H1 (cell line): ENCODE measurements at regions of chr9 and their contacts with region 1.

Region 1: DNA sequence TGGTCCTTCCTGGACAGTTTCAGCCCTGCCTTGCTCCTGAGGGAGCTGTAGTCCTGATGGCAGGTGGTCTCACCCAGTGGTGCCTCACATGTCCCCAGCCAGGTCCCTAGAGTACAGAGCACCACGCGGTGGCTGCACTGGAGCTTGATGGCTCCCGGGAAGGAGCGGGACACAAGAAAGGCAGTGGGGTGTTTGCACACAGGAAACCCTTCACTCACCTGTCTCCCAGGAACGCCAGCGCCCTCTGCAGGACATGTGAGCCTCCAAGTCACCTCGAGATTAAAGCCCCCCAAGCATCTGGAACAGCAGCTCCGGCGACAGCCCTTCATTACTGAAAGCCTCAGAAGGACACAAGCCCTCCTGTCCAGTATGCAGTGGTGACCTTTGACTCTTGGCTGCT is 19.9 kb upstream of the TMEM250 start:
- DNase-seq: peak; percentile 66 to 95
- H3K4me3 ChIP-seq: 0 out of 8 replicates have a peak overlapping the region, but pooled peaks of 1 of the 4 experiments have one; percentile 20
- H3K27ac ChIP-seq: no peak overlapping the region
- H3K4me1 ChIP-seq: peaks cover 3 to 28% (median 18%) of the 10 kb centered on the region in 4 experiments
- H3K27me3 ChIP-seq: peaks cover 4 to 10% (median 10%) of the 10 kb centered on the region in 4 experiments; a peak in 6 of 7 replicates
- CTCF ChIP-seq: peak in 2 of 3 experiments; percentile 78 to 95; a peak in 3 of 4 replicates
- EP300 ChIP-seq: no peak
- POLR2A ChIP-seq: no peak
- RAD21 ChIP-seq: peak; percentile 68 to 77

Region 2: GRCh38 chr9:136118320-136119060 is 20.1 kb before region 1 on chr9 and contains the start of gene TMEM250:
- CTCF ChIA-PET with region 1: interaction called, 10 read pairs
- POLR2A ChIA-PET with region 1: interaction called, 3 read pairs
- DNase-seq: peak; percentile 87 to 94
- H3K4me3 ChIP-seq: peak within 1 kb of the TSS; percentile 50 to 79 (median 56)
- H3K27ac ChIP-seq: peak within 1 kb of the TSS; percentile 65
- H3K4me1 ChIP-seq: peaks cover 0 to 15% (median 7%) of the 10 kb centered on the region in 4 experiments; a peak in 6 of 7 replicates
- H3K27me3 ChIP-seq: no peaks in the 10 kb centered on the region
- CTCF ChIP-seq: peak in 1 of 3 experiments; percentile 39; a peak in 2 of 4 replicates
- EP300 ChIP-seq: no peak
- POLR2A ChIP-seq: peak in 1 of 2 experiments; percentile 59; a peak in 2 of 3 replicates
- RAD21 ChIP-seq: peak in 1 of 2 experiments; percentile 14; a peak in 1 of 4 replicates
- total RNA-seq, gene TMEM250: 34.9 and 35.3 TPM in 2 replicates

Region 3: GRCh38 chr9:136160381-136160841 is 21.8 kb after region 1 on chr9:
- CTCF ChIA-PET with region 1: interaction called, 13 read pairs
- POLR2A ChIA-PET with region 1: no interaction called
- DNase-seq: peak in 1 of 2 experiments; percentile 45
- H3K4me3 ChIP-seq: no peak overlapping the region
- H3K27ac ChIP-seq: no peak overlapping the region
- H3K4me1 ChIP-seq: peaks cover 0 to 9% (median 4%) of the 10 kb centered on the region in 4 experiments; a peak in 2 of 7 replicates
- H3K27me3 ChIP-seq: no peaks in the 10 kb centered on the region
- CTCF ChIP-seq: no peak
- EP300 ChIP-seq: no peak
- POLR2A ChIP-seq: no peak
- RAD21 ChIP-seq: no peak

Region 4: GRCh38 chr9:136196441-136197371 is 58.1 kb after region 1 on chr9:
- CTCF ChIA-PET with region 1: interaction called, 11 read pairs
- POLR2A ChIA-PET with region 1: interaction called, 3 read pairs
- DNase-seq: peak in 1 of 2 experiments; percentile 70
- H3K4me3 ChIP-seq: peak overlapping the region in 1 of 4 experiments; percentile 42; a peak in 3 of 8 replicates
- H3K27ac ChIP-seq: no peak overlapping the region
- H3K4me1 ChIP-seq: peaks cover 3 to 34% (median 24%) of the 10 kb centered on the region in 4 experiments
- H3K27me3 ChIP-seq: peaks cover 93 to 100% (median 99%) of the 10 kb centered on the region in 4 experiments
- CTCF ChIP-seq: no peak
- EP300 ChIP-seq: no peak
- POLR2A ChIP-seq: no peak
- RAD21 ChIP-seq: no peak

Region 5: GRCh38 chr9:136726631-136727191 is 588.1 kb after region 1 on chr9:
- CTCF ChIA-PET with region 1: no interaction called
- POLR2A ChIA-PET with region 1: no interaction called
- DNase-seq: no peak
- H3K4me3 ChIP-seq: peak overlapping the region; percentile 89 to 98 (median 95)
- H3K27ac ChIP-seq: no peak overlapping the region
- H3K4me1 ChIP-seq: peaks cover 3 to 16% (median 5%) of the 10 kb centered on the region in 4 experiments
- H3K27me3 ChIP-seq: peaks cover 0 to 9% (median 5%) of the 10 kb centered on the region in 4 experiments; a peak in 5 of 7 replicates
- CTCF ChIP-seq: peak in 2 of 3 experiments; percentile 57 to 58; a peak in 3 of 4 replicates
- EP300 ChIP-seq: no peak
- POLR2A ChIP-seq: no peak
- RAD21 ChIP-seq: no peak